CD14-positive monocyte (primary cell): ENCODE measurements at regions of chrX and their contacts with region 1.

Region 1: GRCh38 chrX:132615391-132616131 is 126.7 kb upstream of the MBNL3 start:
- DNase-seq: peak; percentile 17 to 44 (median 25)
- H3K4me3 ChIP-seq: no peak overlapping the region
- H3K4me3 Mint-ChIP-seq: no peak overlapping the region
- H3K27ac ChIP-seq: no peak overlapping the region
- H3K27ac Mint-ChIP-seq: no peak overlapping the region
- H3K4me1 ChIP-seq: no peaks in the 10 kb centered on the region
- H3K4me1 Mint-ChIP-seq: no peaks in the 10 kb centered on the region
- H3K27me3 ChIP-seq: peaks cover 0 to 5% of the 10 kb centered on the region in 2 donors
- H3K27me3 Mint-ChIP-seq: peaks cover 0 to 11% (median 3%) of the 10 kb centered on the region in 3 donors
- CTCF ChIP-seq: peak; percentile 49

Region 2: DNA sequence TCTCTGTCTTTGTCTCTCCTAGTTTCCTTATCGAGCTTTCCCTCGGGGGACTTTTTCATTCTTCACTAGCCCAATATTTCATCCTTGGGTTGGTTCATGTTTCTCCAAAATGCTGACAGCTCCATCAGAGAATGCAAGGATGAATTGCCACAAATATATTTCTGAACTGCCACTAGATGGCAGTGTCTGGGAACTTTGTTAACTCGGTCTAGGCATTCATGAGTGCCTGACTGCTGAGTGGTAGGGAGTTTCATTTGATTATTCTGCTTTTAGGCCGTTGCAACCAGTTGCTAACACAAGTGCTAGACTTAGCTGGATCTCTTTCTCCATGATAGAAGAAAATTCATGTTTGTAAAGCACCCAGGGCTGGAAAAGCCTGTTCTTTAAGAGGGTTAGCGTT is 322.8 kb before region 1 on chrX:
- intact Hi-C with region 1: loop called in 1 of 2 experiments (anchors 10 kb)
- DNase-seq: peak; percentile 18 to 49 (median 33)
- H3K4me3 ChIP-seq: no peak overlapping the region
- H3K4me3 Mint-ChIP-seq: no peak overlapping the region
- H3K27ac ChIP-seq: no peak overlapping the region
- H3K27ac Mint-ChIP-seq: no peak overlapping the region
- H3K4me1 ChIP-seq: no peaks in the 10 kb centered on the region
- H3K4me1 Mint-ChIP-seq: no peaks in the 10 kb centered on the region
- H3K27me3 ChIP-seq: peaks cover 0 to 4% of the 10 kb centered on the region in 2 donors
- H3K27me3 Mint-ChIP-seq: peaks cover 0 to 2% (median 2%) of the 10 kb centered on the region in 3 donors
- CTCF ChIP-seq: peak; percentile 59